ENCODE measurements at regions of chr11 and their contacts with region 1.

Region 1: GRCh38 chr11:44621140-44621681 is 55.7 kb downstream of the CD82 start:
- DNase-seq: peak; percentile 75
- H3K4me3 Mint-ChIP-seq: no peak overlapping the region
- H3K27ac Mint-ChIP-seq: peak overlapping the region; percentile 9
- H3K4me1 Mint-ChIP-seq: peaks cover 36% of the 10 kb centered on the region
- H3K27me3 Mint-ChIP-seq: no peaks in the 10 kb centered on the region

Region 2: GRCh38 chr11:44519989-44520737 is 101.0 kb before region 1 on chr11:
- CTCF ChIA-PET with region 1: interaction called, 18 read pairs
- POLR2A ChIA-PET with region 1: interaction called, 3 read pairs
- intact Hi-C with region 1: no loop called
- DNase-seq: no peak
- H3K4me3 Mint-ChIP-seq: no peak overlapping the region
- H3K27ac Mint-ChIP-seq: no peak overlapping the region
- H3K4me1 Mint-ChIP-seq: no peaks in the 10 kb centered on the region
- H3K27me3 Mint-ChIP-seq: peaks cover 22% of the 10 kb centered on the region

Region 3: DNA sequence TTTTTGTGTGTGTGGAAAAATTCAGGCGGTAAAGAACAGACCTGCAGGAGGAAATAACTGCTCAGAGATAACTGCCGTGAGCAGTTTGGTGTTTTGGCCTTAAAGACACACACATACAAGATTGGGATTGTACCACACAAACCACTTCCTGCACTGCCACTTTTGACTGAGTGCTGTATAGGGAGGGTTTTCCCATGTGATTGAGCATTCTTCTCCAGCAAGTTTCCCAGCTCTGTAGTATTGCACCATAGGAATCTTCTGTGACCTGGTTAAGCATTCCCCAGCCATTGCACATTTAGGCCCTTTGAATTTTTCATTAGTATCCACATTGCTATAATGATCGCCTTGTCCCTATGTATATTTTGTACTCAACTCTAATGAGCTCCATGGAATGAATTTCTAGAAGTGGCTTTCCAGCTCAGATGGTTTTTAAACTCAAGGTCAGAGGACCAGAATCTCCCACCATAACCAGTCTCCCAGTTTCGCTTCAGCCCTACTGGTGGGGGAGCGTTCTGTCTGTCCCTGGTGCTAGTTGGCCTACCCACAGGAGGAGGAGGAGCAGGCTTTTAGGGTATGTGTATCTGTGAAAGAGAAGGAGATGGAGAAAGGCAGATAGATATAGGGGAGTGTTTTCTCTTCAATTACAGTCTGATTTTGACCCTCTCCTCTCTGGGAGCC is 46.5 kb before region 1 on chr11:
- CTCF ChIA-PET with region 1: interaction called, 33 read pairs
- POLR2A ChIA-PET with region 1: no interaction called
- intact Hi-C with region 1: no loop called
- DNase-seq: peak; percentile 72
- H3K4me3 Mint-ChIP-seq: peak overlapping the region; percentile 57
- H3K27ac Mint-ChIP-seq: peak overlapping the region; percentile 99
- H3K4me1 Mint-ChIP-seq: peaks cover 98% of the 10 kb centered on the region
- H3K27me3 Mint-ChIP-seq: no peaks in the 10 kb centered on the region

Region 4: GRCh38 chr11:44596525-44597276 is 24.5 kb before region 1 on chr11:
- CTCF ChIA-PET with region 1: interaction called, 24 read pairs
- POLR2A ChIA-PET with region 1: no interaction called
- intact Hi-C with region 1: no loop called
- DNase-seq: peak; percentile 88
- H3K4me3 Mint-ChIP-seq: peak overlapping the region; percentile 63
- H3K27ac Mint-ChIP-seq: peak overlapping the region; percentile 90
- H3K4me1 Mint-ChIP-seq: peaks cover 86% of the 10 kb centered on the region
- H3K27me3 Mint-ChIP-seq: no peaks in the 10 kb centered on the region

Region 5: DNA sequence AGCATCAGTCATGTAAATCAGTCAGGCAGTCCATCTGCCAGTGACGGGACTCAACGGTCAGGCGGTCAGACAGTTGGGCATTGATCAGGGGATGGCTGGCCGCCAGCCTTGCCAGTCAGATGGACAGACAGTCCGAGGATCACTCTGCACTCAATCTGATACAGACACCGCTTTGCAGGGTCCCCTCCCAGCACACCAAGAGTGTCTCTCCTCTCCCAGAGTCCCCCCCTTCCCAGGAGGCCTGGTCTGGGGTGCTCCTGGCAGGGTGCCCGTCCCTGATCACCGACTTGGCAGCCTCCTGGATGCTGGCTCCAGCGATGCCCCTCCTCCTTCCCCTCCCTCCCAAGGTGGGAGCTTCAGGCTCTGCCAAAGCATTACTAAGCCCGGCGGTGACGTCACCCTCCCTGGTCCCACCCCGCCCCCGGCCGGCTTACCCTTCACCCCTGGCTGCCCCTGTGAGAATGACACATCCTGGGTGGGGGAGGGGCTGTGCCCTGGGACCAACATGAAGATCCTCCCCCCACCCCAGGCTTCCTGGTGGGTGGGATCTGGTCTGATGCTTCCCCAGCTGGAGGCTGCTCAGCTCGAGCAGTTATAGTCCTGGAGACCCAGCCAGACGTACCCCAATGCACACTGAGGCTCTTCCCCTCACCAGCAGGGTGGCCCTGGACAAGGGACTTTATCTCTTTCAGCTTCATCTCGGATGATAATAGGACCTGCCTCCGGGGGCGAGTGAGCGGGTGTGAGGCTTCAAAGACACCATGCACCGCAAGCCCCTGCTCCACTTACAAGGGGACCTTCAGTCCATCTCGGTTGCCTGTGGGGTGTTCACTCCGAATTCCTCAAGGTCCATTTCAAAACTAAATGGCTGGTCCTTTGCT is 13.4 kb after region 1 on chr11:
- CTCF ChIA-PET with region 1: interaction called, 10 read pairs
- POLR2A ChIA-PET with region 1: no interaction called
- intact Hi-C with region 1: no loop called
- DNase-seq: peak; percentile 38
- H3K4me3 Mint-ChIP-seq: no peak overlapping the region
- H3K27ac Mint-ChIP-seq: no peak overlapping the region
- H3K4me1 Mint-ChIP-seq: peaks cover 8% of the 10 kb centered on the region
- H3K27me3 Mint-ChIP-seq: peaks cover 4% of the 10 kb centered on the region

Region 6: GRCh38 chr11:44911029-44911814 is 290.0 kb after region 1 on chr11:
- CTCF ChIA-PET with region 1: interaction called, 36 read pairs
- POLR2A ChIA-PET with region 1: no interaction called
- intact Hi-C with region 1: loop called (anchors 1 kb)
- DNase-seq: peak; percentile 88
- H3K4me3 Mint-ChIP-seq: no peak overlapping the region
- H3K27ac Mint-ChIP-seq: no peak overlapping the region
- H3K4me1 Mint-ChIP-seq: peaks cover 4% of the 10 kb centered on the region
- H3K27me3 Mint-ChIP-seq: no peaks in the 10 kb centered on the region